Activated naive CD4-positive, alpha-beta T cell treated with anti-CD3 and anti-CD28 coated beads for 36 hours (primary cell): ENCODE measurements at regions of chr2 and their contacts with region 1.

Region 1: DNA sequence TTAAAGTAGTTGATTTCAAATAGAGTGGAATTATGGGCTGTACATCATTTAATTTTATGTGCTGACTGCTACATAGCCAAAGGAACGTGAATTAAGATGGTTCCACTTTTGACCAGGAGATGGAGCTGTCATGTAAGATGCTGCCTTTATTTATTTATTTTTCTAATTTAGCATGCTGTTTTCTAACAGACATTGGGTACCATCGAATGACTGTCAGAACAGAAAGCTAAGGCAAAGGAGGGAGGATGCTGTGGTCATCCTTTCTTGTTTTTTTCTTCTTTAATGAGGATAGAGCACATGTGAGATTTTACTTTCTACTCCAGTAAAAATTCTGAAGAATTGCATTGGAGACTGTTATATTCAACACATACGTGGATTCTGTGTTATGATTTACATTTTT is at the start of gene SCN2A:
- DNase-seq: no peak
- H3K4me3 Mint-ChIP-seq: no peak within 1 kb of the TSS
- H3K27ac Mint-ChIP-seq: no peak within 1 kb of the TSS
- H3K4me1 Mint-ChIP-seq: no peaks in the 10 kb centered on the region
- H3K27me3 Mint-ChIP-seq: peaks cover 16% of the 10 kb centered on the region
- total RNA-seq, gene SCN2A: 0.10 to 0.14 TPM

Region 2: GRCh38 chr2:165256618-165257017 is 17.4 kb after region 1 on chr2:
- CTCF ChIA-PET with region 1: no interaction called
- intact Hi-C with region 1: no loop called
- DNase-seq: no peak
- H3K4me3 Mint-ChIP-seq: no peak overlapping the region
- H3K27ac Mint-ChIP-seq: no peak overlapping the region
- H3K4me1 Mint-ChIP-seq: no peaks in the 10 kb centered on the region
- H3K27me3 Mint-ChIP-seq: peaks cover 20% of the 10 kb centered on the region

Region 3: DNA sequence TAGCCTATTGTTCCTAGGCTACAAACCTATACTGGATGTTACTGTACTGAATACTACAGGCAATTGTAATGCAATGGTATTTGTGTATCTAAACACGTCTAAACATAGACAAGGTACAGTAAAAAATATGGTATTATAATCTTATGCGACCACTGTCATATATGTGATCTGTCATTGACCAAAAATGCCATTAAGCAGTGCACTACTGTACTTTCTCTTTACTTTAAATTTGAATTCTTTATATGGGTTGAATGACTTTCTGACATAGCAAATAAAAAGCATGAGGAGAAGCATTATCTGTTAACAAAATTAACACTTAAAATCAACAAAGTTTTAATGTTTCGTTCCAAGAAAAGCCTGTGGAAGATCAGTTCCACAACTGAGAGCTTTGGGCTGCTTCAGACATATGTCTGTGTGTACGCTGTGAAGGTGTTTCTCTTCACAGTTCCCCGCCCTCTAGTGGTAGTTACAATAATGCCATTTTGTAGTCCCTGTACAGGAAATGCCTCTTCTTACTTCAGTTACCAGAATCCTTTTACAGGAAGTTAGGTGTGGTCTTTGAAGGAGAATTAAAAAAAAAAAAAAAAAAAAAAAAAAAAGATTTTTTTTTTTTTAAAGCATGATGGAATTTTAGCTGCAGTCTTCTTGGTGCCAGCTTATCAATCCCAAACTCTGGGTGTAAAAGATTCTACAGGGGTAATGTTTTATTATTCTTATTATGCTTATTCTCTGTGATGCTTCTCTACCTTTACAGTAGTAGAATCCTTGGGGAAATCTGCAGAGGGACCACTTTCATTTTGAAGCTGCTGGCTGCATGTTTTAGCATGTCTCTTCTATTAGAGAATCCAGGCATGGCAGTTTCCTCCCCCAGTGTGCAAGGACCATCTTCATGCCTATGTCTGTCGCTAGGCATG is 54.5 kb after region 1 on chr2:
- CTCF ChIA-PET with region 1: interaction called, 18 read pairs
- intact Hi-C with region 1: loop called (anchors 1 kb)
- DNase-seq: peak; percentile 52
- H3K4me3 Mint-ChIP-seq: no peak overlapping the region
- H3K27ac Mint-ChIP-seq: no peak overlapping the region
- H3K4me1 Mint-ChIP-seq: peaks cover 5% of the 10 kb centered on the region
- H3K27me3 Mint-ChIP-seq: peaks cover 10% of the 10 kb centered on the region

Region 4: GRCh38 chr2:165305391-165306096 is 66.3 kb after region 1 on chr2:
- CTCF ChIA-PET with region 1: interaction called, 3 read pairs
- intact Hi-C with region 1: loop called (anchors 1 kb)
- DNase-seq: no peak
- H3K4me3 Mint-ChIP-seq: no peak overlapping the region
- H3K27ac Mint-ChIP-seq: no peak overlapping the region
- H3K4me1 Mint-ChIP-seq: no peaks in the 10 kb centered on the region
- H3K27me3 Mint-ChIP-seq: no peaks in the 10 kb centered on the region

Region 5: DNA sequence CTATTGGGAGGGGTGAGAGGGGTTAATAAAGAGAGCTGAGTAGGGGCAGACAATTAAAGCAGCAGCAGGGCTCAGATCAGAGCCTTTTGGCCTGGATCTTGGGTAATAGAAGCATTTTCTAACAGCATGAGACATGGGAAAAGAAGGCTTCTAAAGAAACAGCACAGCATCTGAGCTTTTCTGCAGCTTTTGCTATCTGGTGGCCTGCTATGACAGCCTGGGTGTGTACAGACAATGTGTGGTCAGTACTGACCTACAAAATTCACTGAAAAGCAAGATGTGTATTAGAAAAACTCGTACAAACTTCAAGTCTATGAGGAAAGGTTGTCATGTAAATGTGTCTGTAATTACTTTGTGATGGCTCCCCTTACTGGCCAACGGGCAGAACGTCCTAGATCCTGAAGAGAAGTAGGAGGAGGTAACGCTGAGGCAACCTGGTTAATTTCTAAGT is 459.2 kb after region 1 on chr2:
- CTCF ChIA-PET with region 1: no interaction called
- intact Hi-C with region 1: loop called (anchors 2 kb)
- DNase-seq: peak; percentile 20
- H3K4me3 Mint-ChIP-seq: no peak overlapping the region
- H3K27ac Mint-ChIP-seq: no peak overlapping the region
- H3K4me1 Mint-ChIP-seq: no peaks in the 10 kb centered on the region
- H3K27me3 Mint-ChIP-seq: peaks cover 8% of the 10 kb centered on the region

Region 6: GRCh38 chr2:166127217-166128155 is 888.3 kb after region 1 on chr2 and contains the start of gene SCN1A:
- CTCF ChIA-PET with region 1: no interaction called
- intact Hi-C with region 1: loop called (anchors 5 kb)
- DNase-seq: no peak
- H3K4me3 Mint-ChIP-seq: no peak within 1 kb of the TSS
- H3K27ac Mint-ChIP-seq: no peak within 1 kb of the TSS
- H3K4me1 Mint-ChIP-seq: peaks cover 2% of the 10 kb centered on the region
- H3K27me3 Mint-ChIP-seq: peaks cover 12% of the 10 kb centered on the region
- total RNA-seq, gene SCN1A: not detected